HepG2 (cell line): ENCODE measurements at regions of chr5 and their contacts with region 1.

Region 1: GRCh38 chr5:38148021-38148625 is 110.2 kb upstream of the EGFLAM start:
- DNase-seq: peak; percentile 99
- ATAC-seq: peak; percentile 97
- H3K4me3 ChIP-seq: peak overlapping the region; percentile 29 to 49 (median 48); a peak in 5 of 6 replicates
- H3K27ac ChIP-seq: peak overlapping the region; percentile 96
- H3K4me1 ChIP-seq: peaks cover 57% of the 10 kb centered on the region
- H3K27me3 ChIP-seq: no peaks in the 10 kb centered on the region
- CTCF ChIP-seq: peak; percentile 10; the same call in 1 of the 2 replicates
- EP300 ChIP-seq: peak; percentile 83 to 88; a peak in 3 of 4 replicates
- POLR2A ChIP-seq: peak; percentile 67 to 95
- RAD21 ChIP-seq: no peak

Region 2: DNA sequence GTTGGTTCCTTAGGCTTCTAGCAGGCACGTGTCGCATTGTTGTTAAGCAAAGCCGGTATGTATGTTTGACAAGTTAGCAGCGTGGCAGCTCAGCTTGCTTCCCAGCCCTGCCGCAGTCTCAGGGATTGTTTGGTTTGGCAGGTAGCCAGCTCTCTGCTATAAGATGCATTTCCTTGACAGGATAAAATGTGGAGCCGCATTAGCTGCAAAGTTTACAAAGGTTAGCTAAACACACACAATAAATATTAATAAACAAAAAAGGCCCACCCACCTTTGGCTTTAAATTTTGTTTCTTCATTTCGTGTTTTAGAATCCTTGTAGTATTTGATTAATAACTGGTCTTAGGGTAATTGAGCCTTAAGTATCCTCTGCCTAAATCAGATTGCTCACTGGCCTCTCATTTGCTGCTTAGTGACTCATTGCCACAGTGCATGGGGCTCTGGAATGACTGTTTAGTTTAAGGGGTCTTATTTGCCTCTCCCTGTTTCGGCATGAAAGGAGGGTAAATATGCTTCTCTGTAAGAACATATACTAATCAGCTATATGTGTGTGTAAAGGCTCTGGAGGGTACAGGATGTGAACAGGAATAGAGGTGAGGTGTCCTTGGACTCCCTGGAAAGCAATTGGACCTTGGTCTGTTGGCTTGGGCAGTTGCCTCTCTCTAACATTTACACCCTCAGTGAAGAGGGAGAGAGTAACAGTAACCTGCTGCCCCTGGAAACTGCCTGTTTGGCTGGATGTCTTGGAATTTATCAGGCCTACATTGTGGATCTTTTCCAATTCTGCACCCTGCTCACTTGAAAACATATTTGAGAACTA is 430.3 kb before region 1 on chr5:
- CTCF ChIA-PET with region 1: no interaction called
- POLR2A ChIA-PET with region 1: no interaction called
- in situ Hi-C with region 1: no loop called
- intact Hi-C with region 1: loop called (anchors 2 kb)
- DNase-seq: peak; percentile 95
- ATAC-seq: peak; percentile 98
- H3K4me3 ChIP-seq: peak overlapping the region in 2 of 3 experiments; percentile 14 to 24; a peak in 1 of 6 replicates
- H3K27ac ChIP-seq: peak overlapping the region; percentile 67
- H3K4me1 ChIP-seq: peaks cover 41% of the 10 kb centered on the region
- H3K27me3 ChIP-seq: no peaks in the 10 kb centered on the region
- CTCF ChIP-seq: no peak
- EP300 ChIP-seq: peak in 1 of 2 experiments; percentile 92; a peak in 2 of 4 replicates
- POLR2A ChIP-seq: no peak
- RAD21 ChIP-seq: no peak

Region 3: DNA sequence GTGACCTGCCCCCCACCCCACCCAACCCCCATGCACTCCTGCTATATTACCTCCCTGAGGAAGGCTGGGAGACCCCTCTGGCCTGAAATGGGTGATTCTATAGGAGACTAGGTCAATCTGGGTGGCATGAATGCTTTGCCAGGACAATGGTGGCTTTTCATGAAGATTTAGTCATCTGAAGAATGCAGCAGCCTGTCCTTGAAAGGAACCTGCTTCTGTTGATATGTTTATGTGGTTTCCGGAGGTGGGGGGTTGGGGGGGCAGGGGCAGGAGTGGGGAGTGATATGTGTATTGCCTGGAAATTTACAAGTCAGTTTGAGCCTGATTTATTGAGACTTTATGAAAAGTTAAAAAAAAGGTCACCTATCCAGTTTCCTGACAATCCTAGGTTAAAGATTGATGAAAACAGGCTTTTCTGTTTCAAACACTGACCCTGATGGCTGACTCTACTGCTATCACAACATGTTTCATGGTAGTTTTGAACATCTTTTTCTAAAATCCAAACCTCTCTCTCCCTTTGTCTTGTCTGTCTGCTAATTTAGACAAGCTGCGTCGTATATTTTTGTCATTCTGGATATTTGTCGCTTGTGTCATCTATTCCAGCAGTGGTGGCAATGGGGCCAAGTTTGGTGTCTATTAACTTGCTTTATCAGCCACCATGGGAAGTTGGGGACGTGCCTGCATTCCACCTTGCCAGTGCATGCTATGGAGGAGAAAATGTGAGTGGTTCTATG is 43.5 kb before region 1 on chr5:
- CTCF ChIA-PET with region 1: no interaction called
- POLR2A ChIA-PET with region 1: interaction called, 12 read pairs
- in situ Hi-C with region 1: no loop called
- intact Hi-C with region 1: loop called (anchors 1 kb)
- DNase-seq: peak; percentile 99
- ATAC-seq: peak; percentile 96
- H3K4me3 ChIP-seq: no peak overlapping the region; a peak in 1 of 6 replicates
- H3K27ac ChIP-seq: peak overlapping the region; percentile 92
- H3K4me1 ChIP-seq: peaks cover 86% of the 10 kb centered on the region
- H3K27me3 ChIP-seq: no peaks in the 10 kb centered on the region
- CTCF ChIP-seq: no peak
- EP300 ChIP-seq: peak; percentile 42 to 93; a peak in 3 of 4 replicates
- POLR2A ChIP-seq: 0 out of 4 replicates have a peak, but pooled peaks of 1 of the 2 experiments have one; percentile 2
- RAD21 ChIP-seq: no peak

Region 4: DNA sequence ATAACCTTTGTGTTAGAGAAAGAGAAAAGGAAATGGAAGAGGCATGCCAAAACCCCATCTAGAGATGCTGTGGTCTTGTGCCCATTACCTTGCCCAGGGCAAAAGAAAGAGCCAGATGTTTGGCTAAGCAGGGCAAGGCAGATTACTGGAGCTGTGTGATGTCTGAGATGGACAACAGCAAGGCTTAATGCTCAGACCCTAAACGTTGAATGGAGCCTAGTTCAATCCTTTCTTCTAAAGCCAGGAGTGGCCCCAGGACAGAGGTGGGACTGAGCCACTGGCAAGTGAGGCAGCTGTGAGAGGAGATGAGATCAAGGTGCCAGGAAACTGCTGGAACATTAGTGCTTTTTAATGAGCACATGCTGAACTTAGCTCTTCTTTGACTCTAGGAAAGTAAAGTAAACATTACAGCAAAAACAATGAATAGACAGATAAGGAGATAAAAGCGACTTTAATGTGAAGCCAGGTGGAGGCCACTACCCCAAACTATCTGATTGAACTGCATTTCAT is 32.8 kb before region 1 on chr5:
- CTCF ChIA-PET with region 1: no interaction called
- POLR2A ChIA-PET with region 1: interaction called, 10 read pairs
- in situ Hi-C with region 1: no loop called
- intact Hi-C with region 1: loop called (anchors 1 kb)
- DNase-seq: peak; percentile 84
- ATAC-seq: peak; percentile 81
- H3K4me3 ChIP-seq: no peak overlapping the region
- H3K27ac ChIP-seq: peak overlapping the region; percentile 75
- H3K4me1 ChIP-seq: peaks cover 60% of the 10 kb centered on the region
- H3K27me3 ChIP-seq: no peaks in the 10 kb centered on the region
- CTCF ChIP-seq: no peak
- EP300 ChIP-seq: peak in 1 of 2 experiments; percentile 83; a peak in 2 of 4 replicates
- POLR2A ChIP-seq: no peak
- RAD21 ChIP-seq: no peak

Region 5: GRCh38 chr5:38167562-38167996 is 19.5 kb after region 1 on chr5:
- CTCF ChIA-PET with region 1: no interaction called
- POLR2A ChIA-PET with region 1: interaction called, 14 read pairs
- in situ Hi-C with region 1: no loop called
- intact Hi-C with region 1: loop called (anchors 2 kb)
- DNase-seq: no peak
- ATAC-seq: no peak
- H3K4me3 ChIP-seq: no peak overlapping the region
- H3K27ac ChIP-seq: no peak overlapping the region
- H3K4me1 ChIP-seq: peaks cover 33% of the 10 kb centered on the region
- H3K27me3 ChIP-seq: no peaks in the 10 kb centered on the region
- CTCF ChIP-seq: no peak
- EP300 ChIP-seq: no peak
- POLR2A ChIP-seq: no peak
- RAD21 ChIP-seq: no peak

Region 6: GRCh38 chr5:38273624-38274023 is 125.5 kb after region 1 on chr5:
- CTCF ChIA-PET with region 1: no interaction called
- POLR2A ChIA-PET with region 1: no interaction called
- in situ Hi-C with region 1: no loop called
- intact Hi-C with region 1: no loop called
- DNase-seq: no peak
- ATAC-seq: no peak
- H3K4me3 ChIP-seq: no peak overlapping the region
- H3K27ac ChIP-seq: no peak overlapping the region
- H3K4me1 ChIP-seq: no peaks in the 10 kb centered on the region
- H3K27me3 ChIP-seq: no peaks in the 10 kb centered on the region
- CTCF ChIP-seq: no peak
- EP300 ChIP-seq: no peak
- POLR2A ChIP-seq: no peak
- RAD21 ChIP-seq: no peak